B cell (primary cell): ENCODE measurements at regions of chr3 and their contacts with region 1.

Region 1: GRCh38 chr3:15268033-15268631 is 62.1 kb downstream of the CAPN7 start:
- DNase-seq: peak; percentile 87
- ATAC-seq: peak; percentile 41
- H3K4me3 ChIP-seq: no peak overlapping the region
- H3K4me3 Mint-ChIP-seq: peak overlapping the region; percentile 39
- H3K27ac ChIP-seq: no peak overlapping the region
- H3K27ac Mint-ChIP-seq: no peak overlapping the region
- H3K4me1 ChIP-seq: peaks cover 71 to 79% of the 10 kb centered on the region in 2 donors
- H3K4me1 Mint-ChIP-seq: peaks cover 81% of the 10 kb centered on the region
- H3K27me3 ChIP-seq: no peaks in the 10 kb centered on the region
- H3K27me3 Mint-ChIP-seq: no peaks in the 10 kb centered on the region
- CTCF ChIP-seq: peak; percentile 92

Region 2: GRCh38 chr3:15284121-15284889 is 16.2 kb after region 1 on chr3:
- CTCF ChIA-PET with region 1: interaction called, 27 read pairs
- POLR2A ChIA-PET with region 1: no interaction called
- intact Hi-C with region 1: loop called (anchors 1 kb)
- DNase-seq: no peak
- ATAC-seq: peak; percentile 62
- H3K4me3 ChIP-seq: peak overlapping the region in 1 of 5 experiments; percentile 7
- H3K4me3 Mint-ChIP-seq: peak overlapping the region; percentile 70
- H3K27ac ChIP-seq: peak overlapping the region in 1 of 2 donors; percentile 25
- H3K27ac Mint-ChIP-seq: peak overlapping the region; percentile 88
- H3K4me1 ChIP-seq: peaks cover 82 to 84% of the 10 kb centered on the region in 2 donors
- H3K4me1 Mint-ChIP-seq: peaks cover 97% of the 10 kb centered on the region
- H3K27me3 ChIP-seq: no peaks in the 10 kb centered on the region
- H3K27me3 Mint-ChIP-seq: no peaks in the 10 kb centered on the region
- CTCF ChIP-seq: no peak

Region 3: DNA sequence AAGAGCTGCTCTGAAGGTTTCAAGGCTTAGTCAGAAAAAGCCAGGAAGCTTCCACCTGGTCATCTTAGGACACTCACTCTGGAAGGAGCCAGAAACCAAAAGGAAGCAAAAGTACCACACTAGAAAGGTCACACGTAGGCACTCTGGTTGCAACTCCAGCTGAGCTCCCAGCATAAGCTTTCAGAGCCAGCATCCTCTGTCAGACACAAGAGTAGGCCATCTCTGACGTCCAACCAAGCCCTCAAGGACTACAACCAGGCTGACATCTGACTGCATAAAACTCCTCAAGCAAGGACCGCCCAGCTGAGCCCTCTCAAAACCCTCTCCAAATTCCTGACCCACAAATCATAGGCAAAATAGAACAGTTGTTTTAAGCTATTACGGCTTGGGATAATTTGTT is 51.4 kb after region 1 on chr3:
- CTCF ChIA-PET with region 1: interaction called, 221 read pairs
- POLR2A ChIA-PET with region 1: no interaction called
- intact Hi-C with region 1: no loop called
- DNase-seq: no peak
- ATAC-seq: no peak
- H3K4me3 ChIP-seq: no peak overlapping the region
- H3K4me3 Mint-ChIP-seq: peak overlapping the region; percentile 39
- H3K27ac ChIP-seq: peak overlapping the region in 1 of 2 donors; percentile 32
- H3K27ac Mint-ChIP-seq: peak overlapping the region; percentile 65
- H3K4me1 ChIP-seq: peaks cover 78 to 91% of the 10 kb centered on the region in 2 donors
- H3K4me1 Mint-ChIP-seq: peaks cover 87% of the 10 kb centered on the region
- H3K27me3 ChIP-seq: no peaks in the 10 kb centered on the region
- H3K27me3 Mint-ChIP-seq: no peaks in the 10 kb centered on the region
- CTCF ChIP-seq: no peak

Region 4: DNA sequence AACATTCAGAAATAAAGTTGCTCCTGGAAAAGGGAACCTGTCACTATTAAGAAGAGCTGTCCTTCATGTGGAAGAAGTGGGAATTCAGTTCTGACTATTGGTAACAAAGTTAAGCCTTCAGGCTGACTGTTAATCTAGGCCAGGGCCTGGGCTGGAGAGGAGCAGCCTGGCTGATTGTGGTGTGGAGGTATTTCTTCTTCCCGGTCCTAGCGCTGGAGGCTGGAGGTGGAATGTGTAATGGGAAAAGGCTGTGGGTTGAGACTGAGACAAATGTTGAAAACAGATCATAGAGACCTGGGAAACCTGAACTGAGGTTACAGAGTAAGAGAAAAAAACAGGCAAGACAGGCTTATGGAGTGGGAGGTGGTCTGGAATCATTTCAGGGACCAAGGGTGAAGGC is 88.1 kb after region 1 on chr3:
- CTCF ChIA-PET with region 1: interaction called, 36 read pairs
- POLR2A ChIA-PET with region 1: interaction called, 3 read pairs
- intact Hi-C with region 1: no loop called
- DNase-seq: no peak
- ATAC-seq: no peak
- H3K4me3 ChIP-seq: peak overlapping the region in 1 of 5 experiments; percentile 27
- H3K4me3 Mint-ChIP-seq: peak overlapping the region; percentile 79
- H3K27ac ChIP-seq: peak overlapping the region; percentile 48 to 81
- H3K27ac Mint-ChIP-seq: peak overlapping the region; percentile 94
- H3K4me1 ChIP-seq: peaks cover 48 to 61% of the 10 kb centered on the region in 2 donors
- H3K4me1 Mint-ChIP-seq: peaks cover 52% of the 10 kb centered on the region
- H3K27me3 ChIP-seq: no peaks in the 10 kb centered on the region
- H3K27me3 Mint-ChIP-seq: no peaks in the 10 kb centered on the region
- CTCF ChIP-seq: no peak

Region 5: DNA sequence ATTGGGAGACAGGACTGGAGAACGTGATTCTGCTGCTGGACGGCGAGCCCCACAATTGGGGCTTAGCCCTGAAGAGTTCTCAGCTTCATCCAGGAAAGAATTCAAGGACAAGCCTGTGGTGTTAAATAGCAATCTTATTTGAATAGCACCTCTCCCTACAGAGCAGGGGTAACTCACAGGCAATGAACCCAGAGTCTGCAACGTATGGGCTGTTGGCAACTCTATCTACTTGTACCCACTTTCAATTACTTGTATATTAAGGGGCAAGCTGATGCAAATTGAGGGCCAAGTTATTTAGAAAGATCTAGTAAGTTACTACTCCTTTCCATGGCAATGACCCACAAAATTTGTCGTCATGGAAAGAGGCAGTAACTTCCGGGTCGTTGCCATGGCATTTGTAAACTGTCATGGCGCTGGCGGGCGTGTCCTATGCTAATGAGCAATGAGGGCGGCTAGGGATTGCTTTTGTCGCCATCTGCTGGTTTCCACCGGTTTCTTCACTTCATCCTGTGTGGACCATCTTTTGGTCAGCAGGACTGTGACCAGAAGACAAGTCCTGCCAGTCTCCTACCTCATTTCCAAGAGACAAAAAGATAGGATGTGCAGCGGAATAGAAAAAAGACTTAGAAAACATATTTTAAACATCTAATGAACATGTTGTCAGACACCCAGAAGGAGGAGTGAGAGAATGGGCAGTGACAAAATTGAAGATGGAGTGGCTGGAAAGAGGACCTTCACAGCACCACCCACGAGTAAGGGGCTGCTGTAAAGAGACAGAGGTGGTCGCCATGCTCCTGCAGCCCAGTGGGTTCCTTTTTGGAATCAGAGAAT is 110.0 kb after region 1 on chr3:
- CTCF ChIA-PET with region 1: interaction called, 137 read pairs
- POLR2A ChIA-PET with region 1: interaction called, 6 read pairs
- intact Hi-C with region 1: loop called (anchors 1 kb)
- DNase-seq: peak; percentile 97
- ATAC-seq: peak; percentile 90
- H3K4me3 ChIP-seq: peak overlapping the region in 1 of 5 experiments; percentile 9
- H3K4me3 Mint-ChIP-seq: peak overlapping the region; percentile 53
- H3K27ac ChIP-seq: peak overlapping the region; percentile 88 to 91
- H3K27ac Mint-ChIP-seq: peak overlapping the region; percentile 95
- H3K4me1 ChIP-seq: peaks cover 37% of the 10 kb centered on the region in 2 donors
- H3K4me1 Mint-ChIP-seq: peaks cover 29% of the 10 kb centered on the region
- H3K27me3 ChIP-seq: no peaks in the 10 kb centered on the region
- H3K27me3 Mint-ChIP-seq: no peaks in the 10 kb centered on the region
- CTCF ChIP-seq: peak; percentile 96

Region 6: GRCh38 chr3:15405448-15406050 is 137.4 kb after region 1 on chr3:
- CTCF ChIA-PET with region 1: interaction called, 421 read pairs
- POLR2A ChIA-PET with region 1: interaction called, 3 read pairs
- intact Hi-C with region 1: loop called (anchors 1 kb)
- DNase-seq: peak; percentile 80
- ATAC-seq: peak; percentile 73
- H3K4me3 ChIP-seq: no peak overlapping the region
- H3K4me3 Mint-ChIP-seq: no peak overlapping the region
- H3K27ac ChIP-seq: no peak overlapping the region
- H3K27ac Mint-ChIP-seq: no peak overlapping the region
- H3K4me1 ChIP-seq: peaks cover 25 to 30% of the 10 kb centered on the region in 2 donors
- H3K4me1 Mint-ChIP-seq: peaks cover 19% of the 10 kb centered on the region
- H3K27me3 ChIP-seq: no peaks in the 10 kb centered on the region
- H3K27me3 Mint-ChIP-seq: no peaks in the 10 kb centered on the region
- CTCF ChIP-seq: peak; percentile 84